Tibial artery (tissue), 4 donors: ENCODE measurements at regions of chr12 and their contacts with region 1.

Region 1: GRCh38 chr12:12376646-12377448 is 20.0 kb downstream of the BORCS5 start:
- DNase-seq: no peak
- H3K4me3 ChIP-seq: no peak overlapping the region
- H3K27ac ChIP-seq: no peak overlapping the region
- H3K4me1 ChIP-seq: peaks cover 0 to 18% (median 9%) of the 10 kb centered on the region in 4 donors
- H3K27me3 ChIP-seq: no peaks in the 10 kb centered on the region
- CTCF ChIP-seq: peak; percentile 66 to 86

Region 2: GRCh38 chr12:12171991-12172521 is 204.8 kb before region 1 on chr12:
- intact Hi-C with region 1: no loop called
- DNase-seq: no peak
- H3K4me3 ChIP-seq: no peak overlapping the region
- H3K27ac ChIP-seq: no peak overlapping the region
- H3K4me1 ChIP-seq: peaks cover 0 to 12% (median 4%) of the 10 kb centered on the region in 4 donors
- H3K27me3 ChIP-seq: no peaks in the 10 kb centered on the region
- CTCF ChIP-seq: no peak

Region 3: GRCh38 chr12:12654691-12655460 is 278.0 kb after region 1 on chr12:
- intact Hi-C with region 1: loop called (anchors 5 kb)
- DNase-seq: no peak
- H3K4me3 ChIP-seq: no peak overlapping the region
- H3K27ac ChIP-seq: no peak overlapping the region
- H3K4me1 ChIP-seq: peaks cover 0 to 13% (median 6%) of the 10 kb centered on the region in 4 donors
- H3K27me3 ChIP-seq: no peaks in the 10 kb centered on the region
- CTCF ChIP-seq: no peak

Region 4: GRCh38 chr12:12704593-12705230 is 327.9 kb after region 1 on chr12:
- intact Hi-C with region 1: loop called (anchors 5 kb)
- DNase-seq: peak in 1 of 2 donors; percentile 64
- H3K4me3 ChIP-seq: no peak overlapping the region
- H3K27ac ChIP-seq: peak overlapping the region in 1 of 2 donors; percentile 11
- H3K4me1 ChIP-seq: peaks cover 0 to 8% (median 2%) of the 10 kb centered on the region in 4 donors
- H3K27me3 ChIP-seq: no peaks in the 10 kb centered on the region
- CTCF ChIP-seq: peak; percentile 96 to 99